ENCODE measurements at regions of chr19 and their contacts with region 1.

Region 1: GRCh38 chr19:57682226-57682766 is 519 bp downstream of the ZNF551 start:
- DNase-seq: no peak
- ATAC-seq: peak; percentile 28; the same call in 2 of the 3 replicates
- H3K4me3 ChIP-seq: peak overlapping the region; percentile 93 to 99 (median 96)
- H3K27ac ChIP-seq: peak overlapping the region; percentile 65
- H3K4me1 ChIP-seq: peaks cover 24% of the 10 kb centered on the region
- H3K27me3 ChIP-seq: no peaks in the 10 kb centered on the region; a peak in 1 of 5 replicates
- CTCF ChIP-seq: no peak
- EP300 ChIP-seq: no peak
- POLR2A ChIP-seq: no peak
- RAD21 ChIP-seq: no peak

Region 2: DNA sequence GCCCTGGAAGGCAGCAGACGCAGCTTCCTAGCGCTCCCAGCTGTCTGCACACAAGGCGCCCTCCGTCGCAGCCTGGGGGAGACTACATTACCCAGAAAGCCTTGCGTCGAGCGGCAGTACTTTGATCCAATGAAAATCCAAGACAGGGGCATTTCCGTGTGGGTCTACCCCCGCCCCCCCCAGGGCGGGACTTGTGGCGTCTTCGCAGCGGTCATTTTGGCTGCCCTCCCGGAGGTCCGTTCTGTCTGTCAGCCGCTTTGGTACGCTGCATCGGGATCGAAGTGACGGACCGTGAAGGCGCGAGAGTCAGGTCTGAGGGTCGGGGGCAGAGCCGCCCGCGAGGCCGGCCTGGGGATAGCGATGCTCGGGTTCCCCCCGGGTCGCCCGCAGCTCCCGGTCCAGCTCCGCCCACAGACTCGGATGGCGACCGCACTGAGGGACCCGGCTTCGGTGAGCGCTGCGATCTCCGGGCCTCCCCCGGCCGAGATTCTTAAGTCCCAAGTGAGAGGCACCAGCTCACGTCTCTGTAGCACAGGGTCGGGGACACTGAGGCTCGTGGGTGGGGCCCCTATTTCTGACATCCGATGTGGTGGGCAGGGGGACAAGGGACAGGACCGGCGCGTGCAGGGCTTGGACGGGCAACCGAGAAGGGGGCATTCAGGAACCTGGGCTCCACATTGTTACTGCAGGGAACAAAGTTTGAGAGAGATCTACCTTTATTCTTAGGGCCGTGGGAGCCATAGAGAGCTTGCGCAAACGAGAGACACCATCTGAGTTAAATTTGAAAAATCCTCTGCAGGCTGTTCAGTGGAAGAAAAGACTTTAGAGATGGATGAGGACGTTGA is 49.1 kb before region 1 on chr19 and contains the start of gene ZNF211:
- CTCF ChIA-PET with region 1: no interaction called
- POLR2A ChIA-PET with region 1: interaction called, 5 read pairs
- in situ Hi-C with region 1: no loop called
- intact Hi-C with region 1: loop called (anchors 2 kb)
- DNase-seq: peak; percentile 92
- ATAC-seq: peak; percentile 98
- H3K4me3 ChIP-seq: peak within 1 kb of the TSS; percentile 87 to 96 (median 89)
- H3K27ac ChIP-seq: peak within 1 kb of the TSS; percentile 34
- H3K4me1 ChIP-seq: peaks cover 12% of the 10 kb centered on the region
- H3K27me3 ChIP-seq: no peaks in the 10 kb centered on the region; a peak in 1 of 5 replicates
- CTCF ChIP-seq: peak; percentile 40; the same call in 1 of the 2 replicates
- EP300 ChIP-seq: no peak
- POLR2A ChIP-seq: peak; percentile 31 to 74; a peak in 2 of 4 replicates
- RAD21 ChIP-seq: no peak
- total RNA-seq, gene ZNF211: 11.2 and 12.2 TPM in 2 replicates

Region 3: DNA sequence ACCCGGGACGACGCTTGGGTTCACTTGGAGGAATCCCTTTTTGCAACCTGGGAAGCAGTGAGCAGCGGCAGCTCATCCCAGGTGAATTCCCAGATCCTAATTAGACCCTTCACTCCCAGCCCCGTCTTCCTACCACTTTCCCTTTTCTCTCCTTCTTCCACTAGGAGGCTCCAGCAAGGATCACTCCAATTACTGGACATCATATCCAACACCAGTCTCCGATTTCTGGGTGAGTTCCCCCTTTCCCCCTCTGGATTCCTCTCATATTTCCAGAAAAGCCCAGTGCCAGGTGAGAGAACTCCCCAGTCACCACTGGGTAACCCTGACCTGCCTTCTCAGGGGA is 30.7 kb before region 1 on chr19:
- CTCF ChIA-PET with region 1: no interaction called
- POLR2A ChIA-PET with region 1: interaction called, 11 read pairs
- in situ Hi-C with region 1: no loop called
- intact Hi-C with region 1: no loop called
- DNase-seq: no peak
- ATAC-seq: peak; percentile 75
- H3K4me3 ChIP-seq: peak overlapping the region; percentile 52 to 69 (median 61)
- H3K27ac ChIP-seq: peak overlapping the region; percentile 65
- H3K4me1 ChIP-seq: peaks cover 43% of the 10 kb centered on the region
- H3K27me3 ChIP-seq: no peaks in the 10 kb centered on the region
- CTCF ChIP-seq: peak; percentile 55
- EP300 ChIP-seq: no peak
- POLR2A ChIP-seq: no peak
- RAD21 ChIP-seq: no peak

Region 4: GRCh38 chr19:57664269-57665127 is 17.8 kb before region 1 on chr19:
- CTCF ChIA-PET with region 1: no interaction called
- POLR2A ChIA-PET with region 1: interaction called, 21 read pairs
- in situ Hi-C with region 1: no loop called
- intact Hi-C with region 1: no loop called
- DNase-seq: peak; percentile 39
- ATAC-seq: peak; percentile 97
- H3K4me3 ChIP-seq: peak overlapping the region; percentile 67 to 71 (median 70)
- H3K27ac ChIP-seq: peak overlapping the region; percentile 30
- H3K4me1 ChIP-seq: peaks cover 15% of the 10 kb centered on the region
- H3K27me3 ChIP-seq: no peaks in the 10 kb centered on the region; a peak in 1 of 5 replicates
- CTCF ChIP-seq: peak; percentile 43
- EP300 ChIP-seq: no peak
- POLR2A ChIP-seq: peak in 1 of 2 experiments; percentile 60; a peak in 1 of 4 replicates
- RAD21 ChIP-seq: peak; percentile 29; the same call in 1 of the 2 replicates

Region 5: DNA sequence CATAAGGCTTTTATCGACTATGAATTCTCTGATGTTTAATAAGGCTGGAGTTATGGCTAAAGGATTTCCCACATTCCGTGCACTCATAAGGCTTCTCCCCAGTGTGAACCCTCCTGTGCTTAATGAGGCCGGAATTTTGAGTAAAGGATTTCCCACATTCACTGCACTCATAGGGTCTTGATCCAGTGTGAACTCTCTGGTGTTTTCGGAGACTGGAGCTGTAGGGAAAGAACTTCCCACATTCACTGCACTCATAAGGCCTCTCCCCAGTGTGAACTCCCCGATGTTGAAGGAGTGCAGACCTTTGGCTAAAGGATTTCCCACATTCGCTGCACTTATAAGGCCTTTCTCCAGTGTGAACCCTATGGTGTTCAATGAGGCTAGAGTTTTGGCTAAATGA is 19.3 kb after region 1 on chr19:
- CTCF ChIA-PET with region 1: no interaction called
- POLR2A ChIA-PET with region 1: no interaction called
- in situ Hi-C with region 1: no loop called
- intact Hi-C with region 1: no loop called
- DNase-seq: no peak
- ATAC-seq: no peak
- H3K4me3 ChIP-seq: no peak overlapping the region
- H3K27ac ChIP-seq: no peak overlapping the region
- H3K4me1 ChIP-seq: no peaks in the 10 kb centered on the region
- H3K27me3 ChIP-seq: no peaks in the 10 kb centered on the region
- CTCF ChIP-seq: no peak
- EP300 ChIP-seq: no peak
- POLR2A ChIP-seq: no peak
- RAD21 ChIP-seq: no peak

Region 6: GRCh38 chr19:57819475-57820148 is 137.3 kb after region 1 on chr19:
- CTCF ChIA-PET with region 1: no interaction called
- POLR2A ChIA-PET with region 1: interaction called, 16 read pairs
- in situ Hi-C with region 1: no loop called
- intact Hi-C with region 1: no loop called
- DNase-seq: peak; percentile 97
- ATAC-seq: peak; percentile 86
- H3K4me3 ChIP-seq: peak overlapping the region; percentile 86 to 96 (median 88)
- H3K27ac ChIP-seq: peak overlapping the region; percentile 90
- H3K4me1 ChIP-seq: peaks cover 62% of the 10 kb centered on the region
- H3K27me3 ChIP-seq: no peaks in the 10 kb centered on the region; a peak in 1 of 5 replicates
- CTCF ChIP-seq: peak; percentile 66
- EP300 ChIP-seq: no peak
- POLR2A ChIP-seq: peak; percentile 92 to 94
- RAD21 ChIP-seq: no peak; the same call in 1 of the 2 replicates